ENCODE measurements at regions of chr3 and their contacts with region 1.

Region 1: GRCh38 chr3:32816439-32817256 is 1.1 kb upstream of the TRIM71 start:
- DNase-seq: peak; percentile 95
- ATAC-seq: peak; percentile 76
- H3K4me3 ChIP-seq: peak overlapping the region; percentile 94 to 98 (median 94)
- H3K27ac ChIP-seq: peak overlapping the region; percentile 99
- H3K4me1 ChIP-seq: peaks cover 35% of the 10 kb centered on the region
- H3K27me3 ChIP-seq: peaks cover 0 to 6% of the 10 kb centered on the region in 2 experiments; a peak in 1 of 5 replicates
- CTCF ChIP-seq: peak; percentile 22; the same call in 1 of the 2 replicates
- EP300 ChIP-seq: peak in 1 of 2 experiments; percentile 70; a peak in 2 of 4 replicates
- POLR2A ChIP-seq: peak; percentile 79 to 81
- RAD21 ChIP-seq: peak; percentile 55; the same call in 1 of the 2 replicates

Region 2: DNA sequence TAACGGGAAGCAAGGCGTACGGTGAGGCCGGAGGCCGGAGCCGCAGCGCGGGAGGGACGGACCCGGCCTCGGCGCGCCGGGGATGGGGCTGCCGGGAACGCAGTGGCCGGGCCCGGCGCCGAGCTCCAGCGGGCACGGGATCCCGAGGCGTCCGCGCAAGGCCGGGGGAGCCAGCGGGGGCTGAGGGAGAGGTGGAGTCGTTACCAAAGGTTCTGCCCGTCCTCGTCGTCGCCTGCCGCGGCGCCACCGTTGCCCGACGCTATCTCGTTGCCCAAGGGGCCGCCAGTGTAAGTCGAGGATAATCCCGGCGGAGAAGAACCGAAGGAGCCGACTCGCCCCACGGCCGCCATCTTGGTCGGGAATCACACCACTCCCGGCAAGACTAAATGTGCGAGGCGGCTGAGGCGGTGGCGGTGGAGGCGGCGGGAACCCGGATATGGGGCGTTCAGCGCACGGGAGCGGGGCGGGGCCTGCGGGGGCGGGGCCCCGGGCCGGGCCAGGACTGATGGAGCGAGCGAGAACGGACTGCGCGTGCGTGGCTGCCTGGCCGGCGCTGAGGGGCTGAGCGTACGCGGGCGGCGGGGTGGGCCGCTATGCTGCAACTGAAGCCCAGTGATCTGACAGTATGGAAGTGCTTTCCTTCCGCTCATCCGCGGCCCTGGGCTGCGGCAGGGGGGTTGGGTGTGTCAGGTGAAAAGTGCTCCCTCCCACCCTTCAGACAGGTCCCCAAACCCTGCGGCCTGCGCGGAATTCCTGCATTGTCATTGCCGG is 246.0 kb before region 1 on chr3 and contains the start of gene DYNC1LI1:
- CTCF ChIA-PET with region 1: no interaction called
- POLR2A ChIA-PET with region 1: no interaction called
- in situ Hi-C with region 1: no loop called
- intact Hi-C with region 1: loop called (anchors 1 kb)
- DNase-seq: peak; percentile 80
- ATAC-seq: peak; percentile 91
- H3K4me3 ChIP-seq: peak within 1 kb of the TSS; percentile 90 to 99 (median 97)
- H3K27ac ChIP-seq: peak within 1 kb of the TSS; percentile 97
- H3K4me1 ChIP-seq: peaks cover 49% of the 10 kb centered on the region
- H3K27me3 ChIP-seq: no peaks in the 10 kb centered on the region
- CTCF ChIP-seq: no peak
- EP300 ChIP-seq: no peak
- POLR2A ChIP-seq: peak; percentile 76 to 93
- RAD21 ChIP-seq: peak; percentile 12; the same call in 1 of the 2 replicates
- total RNA-seq, gene DYNC1LI1: 37.1 and 51.6 TPM in 2 replicates

Region 3: DNA sequence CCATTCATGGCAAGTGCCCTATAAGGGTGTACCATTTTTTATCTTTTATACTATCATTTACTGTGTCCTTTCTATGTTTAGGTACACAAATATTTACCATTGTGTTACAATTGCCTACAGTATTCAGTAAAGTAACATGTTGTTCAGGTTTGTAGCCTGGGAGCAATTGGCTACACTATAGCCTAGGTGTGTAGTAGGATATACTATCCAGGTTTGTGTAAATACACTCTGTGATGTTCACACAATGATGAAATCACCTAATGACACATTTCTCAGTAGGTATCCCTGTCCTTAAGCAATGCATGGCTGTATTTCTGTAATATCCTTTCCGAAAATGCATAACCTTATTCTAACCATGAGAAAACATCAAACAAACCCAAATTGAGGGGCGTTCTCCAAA is 149.5 kb before region 1 on chr3:
- CTCF ChIA-PET with region 1: no interaction called
- POLR2A ChIA-PET with region 1: no interaction called
- in situ Hi-C with region 1: no loop called
- intact Hi-C with region 1: no loop called
- DNase-seq: no peak
- ATAC-seq: peak; percentile 48
- H3K4me3 ChIP-seq: no peak overlapping the region
- H3K27ac ChIP-seq: no peak overlapping the region
- H3K4me1 ChIP-seq: peaks cover 31% of the 10 kb centered on the region
- H3K27me3 ChIP-seq: peaks cover 0 to 11% of the 10 kb centered on the region in 2 experiments; a peak in 1 of 5 replicates
- CTCF ChIP-seq: no peak
- EP300 ChIP-seq: no peak
- POLR2A ChIP-seq: no peak
- RAD21 ChIP-seq: no peak

Region 4: DNA sequence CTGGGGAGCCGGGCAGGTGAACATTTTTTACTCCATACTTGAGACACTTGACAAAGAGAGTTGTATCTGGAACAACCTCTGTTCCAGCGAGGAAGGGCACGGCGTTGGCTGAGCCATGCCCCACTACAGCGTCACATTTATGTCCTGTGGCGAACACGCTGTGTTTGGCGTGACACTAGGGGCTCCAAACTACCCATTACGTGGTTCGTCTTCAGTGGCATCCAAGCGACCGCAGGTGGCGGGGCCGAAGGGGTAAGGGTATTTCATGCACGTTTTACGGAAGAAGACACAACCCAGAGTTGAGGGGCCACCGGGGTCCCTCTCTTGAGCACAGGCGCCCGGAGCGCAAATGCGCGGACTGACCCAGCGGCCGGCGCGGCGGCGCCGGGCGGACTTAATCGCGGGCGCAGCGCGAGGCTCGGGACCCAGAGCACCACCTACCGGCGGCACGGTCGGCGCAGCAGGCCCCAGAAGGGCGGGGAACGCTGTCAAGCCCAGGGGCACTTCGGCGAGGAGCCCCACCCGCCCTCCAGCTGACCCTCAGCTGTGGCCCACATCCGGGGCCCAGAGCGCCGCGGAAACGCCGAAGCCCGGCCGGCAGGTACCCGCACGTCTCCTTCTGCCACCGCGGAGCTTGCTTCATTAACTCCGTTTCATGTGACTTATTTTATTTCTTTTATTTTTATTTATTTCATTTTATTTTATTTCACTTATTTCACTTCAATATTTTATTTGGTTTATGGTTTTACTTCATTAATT is 35.3 kb before region 1 on chr3:
- CTCF ChIA-PET with region 1: interaction called, 5 read pairs
- POLR2A ChIA-PET with region 1: interaction called, 22 read pairs
- in situ Hi-C with region 1: loop called (anchors 5 kb)
- intact Hi-C with region 1: loop called (anchors 1 kb)
- DNase-seq: peak; percentile 83
- ATAC-seq: peak; percentile 85
- H3K4me3 ChIP-seq: peak overlapping the region; percentile 68 to 81 (median 71); a peak in 5 of 6 replicates
- H3K27ac ChIP-seq: peak overlapping the region; percentile 85
- H3K4me1 ChIP-seq: peaks cover 43% of the 10 kb centered on the region
- H3K27me3 ChIP-seq: no peaks in the 10 kb centered on the region; a peak in 1 of 5 replicates
- CTCF ChIP-seq: peak; percentile 90
- EP300 ChIP-seq: peak in 1 of 2 experiments; percentile 51; a peak in 1 of 4 replicates
- POLR2A ChIP-seq: peak; percentile 59 to 72
- RAD21 ChIP-seq: peak; percentile 90

Region 5: DNA sequence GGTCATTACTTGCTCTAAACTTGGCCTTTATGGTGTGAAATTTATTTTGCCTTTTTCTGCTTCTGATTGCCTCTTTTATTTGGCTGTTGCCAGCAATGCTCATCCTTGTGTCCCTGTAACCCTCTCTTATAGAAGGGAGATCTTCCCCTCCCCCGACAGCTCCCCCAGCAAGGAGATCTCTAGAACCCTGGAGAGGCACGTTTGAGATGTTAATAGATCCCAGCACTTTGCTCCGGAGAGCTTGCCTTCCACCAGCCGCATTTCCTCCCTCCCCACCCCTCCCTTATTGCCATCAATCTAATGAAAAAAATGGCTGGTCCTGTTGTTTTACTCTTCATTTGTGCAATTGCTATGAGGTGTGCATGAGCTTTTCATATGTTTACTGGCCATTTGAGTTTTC is 19.3 kb after region 1 on chr3:
- CTCF ChIA-PET with region 1: no interaction called
- POLR2A ChIA-PET with region 1: interaction called, 36 read pairs
- in situ Hi-C with region 1: no loop called
- intact Hi-C with region 1: no loop called
- DNase-seq: no peak
- ATAC-seq: no peak
- H3K4me3 ChIP-seq: peak overlapping the region; percentile 4 to 35 (median 35); a peak in 4 of 6 replicates
- H3K27ac ChIP-seq: peak overlapping the region; percentile 100
- H3K4me1 ChIP-seq: peaks cover 99% of the 10 kb centered on the region
- H3K27me3 ChIP-seq: no peaks in the 10 kb centered on the region
- CTCF ChIP-seq: no peak
- EP300 ChIP-seq: no peak
- POLR2A ChIP-seq: no peak
- RAD21 ChIP-seq: no peak

Region 6: DNA sequence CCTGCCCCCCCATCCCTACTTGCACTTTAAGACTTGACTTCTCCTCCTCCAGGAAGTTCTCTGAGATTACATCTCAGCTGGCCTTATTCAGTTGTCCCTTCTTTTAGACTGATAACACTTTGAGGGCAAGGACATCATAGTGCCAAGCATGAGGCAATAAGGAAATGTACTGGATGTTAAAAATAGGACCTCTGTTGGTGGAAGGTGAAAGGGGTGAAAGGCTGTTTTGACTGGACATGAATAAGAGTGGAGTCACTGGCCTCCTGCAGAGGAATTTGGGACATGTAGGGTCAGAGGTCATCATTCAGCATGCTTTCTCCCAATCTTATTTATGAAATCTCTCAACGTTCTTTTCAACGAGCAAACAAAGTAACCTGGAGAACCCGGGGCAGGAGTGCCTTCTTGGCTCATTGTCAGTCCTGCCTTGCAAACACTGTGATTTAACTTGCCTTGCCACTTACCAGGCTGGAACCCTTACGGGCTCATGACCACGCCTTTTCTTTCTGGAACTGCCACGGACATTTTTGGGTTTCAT is 39.8 kb after region 1 on chr3:
- CTCF ChIA-PET with region 1: no interaction called
- POLR2A ChIA-PET with region 1: interaction called, 23 read pairs
- in situ Hi-C with region 1: no loop called
- intact Hi-C with region 1: no loop called
- DNase-seq: peak; percentile 65
- ATAC-seq: peak; percentile 14
- H3K4me3 ChIP-seq: peak overlapping the region in 1 of 3 experiments; percentile 17; a peak in 1 of 6 replicates
- H3K27ac ChIP-seq: peak overlapping the region; percentile 76
- H3K4me1 ChIP-seq: peaks cover 100% of the 10 kb centered on the region
- H3K27me3 ChIP-seq: no peaks in the 10 kb centered on the region
- CTCF ChIP-seq: no peak
- EP300 ChIP-seq: no peak
- POLR2A ChIP-seq: no peak
- RAD21 ChIP-seq: no peak